Mammary epithelial cell (primary cell): ENCODE measurements at regions of chr20 and their contacts with region 1.

Region 1: DNA sequence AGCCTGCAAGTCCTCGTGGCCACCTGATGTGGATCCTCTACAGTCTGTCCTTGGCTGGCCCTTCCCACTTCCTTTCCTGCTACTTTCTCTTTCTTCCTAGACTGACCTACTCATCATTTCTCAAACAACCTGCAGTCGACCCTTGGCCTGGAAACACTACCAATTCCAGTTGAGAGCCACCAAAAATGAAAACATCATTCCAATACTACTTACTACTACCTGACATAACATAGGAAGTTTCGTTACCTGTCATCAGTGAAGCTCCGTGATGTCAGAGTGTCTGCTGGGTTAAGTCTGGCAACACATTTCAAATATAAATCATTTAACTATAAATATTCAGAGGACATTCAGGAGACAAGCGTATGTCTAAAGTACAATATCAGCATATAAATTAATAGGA is 13.8 kb downstream of the GZF1 start:
- DNase-seq: no peak
- H3K4me3 ChIP-seq: no peak overlapping the region
- H3K27ac ChIP-seq: no peak overlapping the region
- H3K4me1 ChIP-seq: no peaks in the 10 kb centered on the region
- H3K27me3 ChIP-seq: no peaks in the 10 kb centered on the region
- CTCF ChIP-seq: no peak

Region 2: DNA sequence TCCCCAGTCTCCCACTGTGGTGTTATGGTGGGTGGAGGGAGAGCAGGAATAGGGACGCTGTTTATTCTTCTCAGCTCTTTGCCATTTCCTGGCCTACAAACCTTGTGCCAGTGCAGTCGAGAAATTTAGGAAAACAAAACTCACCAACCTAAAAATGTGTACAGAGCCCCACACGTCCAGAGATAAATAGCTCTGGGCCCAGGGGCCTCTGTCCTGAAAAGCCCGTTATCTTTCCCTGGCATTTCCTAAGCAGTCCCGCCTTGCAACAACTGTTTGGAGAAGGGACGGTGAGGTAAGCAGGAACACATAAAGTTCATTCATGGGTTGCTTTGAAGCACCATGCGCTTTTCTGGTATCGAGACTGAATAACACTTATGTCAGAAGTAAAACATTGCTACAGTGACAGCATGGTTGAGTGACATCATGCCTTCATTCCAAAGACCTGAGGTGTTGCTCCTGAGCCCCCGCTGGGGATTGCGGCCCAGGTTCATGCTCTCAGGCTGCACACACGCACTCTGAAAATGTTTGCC is 105.4 kb before region 1 on chr20:
- CTCF ChIA-PET with region 1: no interaction called
- dilution Hi-C with region 1: no loop called
- in situ Hi-C with region 1: no loop called
- intact Hi-C with region 1: no loop called
- DNase-seq: no peak
- H3K4me3 ChIP-seq: no peak overlapping the region
- H3K27ac ChIP-seq: no peak overlapping the region
- H3K4me1 ChIP-seq: no peaks in the 10 kb centered on the region
- H3K27me3 ChIP-seq: no peaks in the 10 kb centered on the region
- CTCF ChIP-seq: no peak

Region 3: GRCh38 chr20:23412026-23412425 is 36.2 kb after region 1 on chr20:
- CTCF ChIA-PET with region 1: no interaction called
- dilution Hi-C with region 1: loop called (anchors 5 kb)
- in situ Hi-C with region 1: no loop called
- intact Hi-C with region 1: no loop called
- DNase-seq: no peak
- H3K4me3 ChIP-seq: no peak overlapping the region
- H3K27ac ChIP-seq: no peak overlapping the region
- H3K4me1 ChIP-seq: peaks cover 5% of the 10 kb centered on the region
- H3K27me3 ChIP-seq: no peaks in the 10 kb centered on the region
- CTCF ChIP-seq: no peak